ENCODE measurements at regions of chr12 and their contacts with region 1.

Region 1: DNA sequence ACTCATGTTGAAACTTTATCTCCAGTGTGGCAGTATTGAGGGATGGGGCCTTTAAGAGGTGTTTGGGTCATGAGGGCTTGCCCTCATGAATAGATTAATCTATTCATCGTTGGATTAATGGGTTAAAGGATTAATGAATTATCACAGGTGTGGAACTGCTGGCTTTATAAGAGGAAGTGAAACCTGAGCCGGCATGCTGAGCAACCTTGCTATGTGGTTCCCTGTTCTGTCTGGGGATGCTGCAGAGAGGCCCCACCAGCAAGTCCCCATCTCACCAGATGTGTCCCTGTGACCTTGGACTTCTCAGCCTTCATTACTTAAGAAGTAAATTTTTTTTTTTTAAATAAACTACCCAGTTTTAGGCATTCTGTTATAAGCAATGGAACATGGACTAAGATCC is 109.6 kb downstream of the DYRK2 start:
- DNase-seq: no peak
- ATAC-seq: no peak

Region 2: GRCh38 chr12:67827820-67828383 is 69.8 kb after region 1 on chr12:
- intact Hi-C with region 1: loop called (anchors 10 kb)
- DNase-seq: no peak
- ATAC-seq: peak; percentile 89

Measured in Right ventricle myocardium inferior (tissue), 1 donor.